AG04450 (cell line): ENCODE measurements at regions of chr5 and their contacts with region 1.

Region 1: GRCh38 chr5:134041570-134042411 is 37.0 kb upstream of the VDAC1 start:
- DNase-seq: no peak
- H3K4me3 ChIP-seq: no peak overlapping the region
- H3K27ac ChIP-seq: no peak overlapping the region
- H3K27me3 ChIP-seq: peaks cover 32% of the 10 kb centered on the region
- CTCF ChIP-seq: no peak

Region 2: GRCh38 chr5:134026521-134027268 is 15.1 kb before region 1 on chr5:
- CTCF ChIA-PET with region 1: interaction called, 32 read pairs
- POLR2A ChIA-PET with region 1: interaction called, 3 read pairs
- DNase-seq: peak; percentile 29
- H3K4me3 ChIP-seq: no peak overlapping the region
- H3K27ac ChIP-seq: no peak overlapping the region
- H3K27me3 ChIP-seq: peaks cover 44% of the 10 kb centered on the region
- CTCF ChIP-seq: peak; percentile 69

Region 3: GRCh38 chr5:134070725-134071613 is 29.2 kb after region 1 on chr5:
- CTCF ChIA-PET with region 1: interaction called, 27 read pairs
- POLR2A ChIA-PET with region 1: no interaction called
- DNase-seq: no peak
- H3K4me3 ChIP-seq: peak overlapping the region; percentile 10; the same call in 1 of the 2 replicates
- H3K27ac ChIP-seq: no peak overlapping the region
- H3K27me3 ChIP-seq: peaks cover 45% of the 10 kb centered on the region
- CTCF ChIP-seq: no peak

Region 4: GRCh38 chr5:134125039-134126015 is 83.5 kb after region 1 on chr5:
- CTCF ChIA-PET with region 1: interaction called, 41 read pairs
- POLR2A ChIA-PET with region 1: interaction called, 4 read pairs
- DNase-seq: peak; percentile 75
- H3K4me3 ChIP-seq: no peak overlapping the region
- H3K27ac ChIP-seq: peak overlapping the region; percentile 96
- H3K27me3 ChIP-seq: no peaks in the 10 kb centered on the region
- CTCF ChIP-seq: no peak

Region 5: DNA sequence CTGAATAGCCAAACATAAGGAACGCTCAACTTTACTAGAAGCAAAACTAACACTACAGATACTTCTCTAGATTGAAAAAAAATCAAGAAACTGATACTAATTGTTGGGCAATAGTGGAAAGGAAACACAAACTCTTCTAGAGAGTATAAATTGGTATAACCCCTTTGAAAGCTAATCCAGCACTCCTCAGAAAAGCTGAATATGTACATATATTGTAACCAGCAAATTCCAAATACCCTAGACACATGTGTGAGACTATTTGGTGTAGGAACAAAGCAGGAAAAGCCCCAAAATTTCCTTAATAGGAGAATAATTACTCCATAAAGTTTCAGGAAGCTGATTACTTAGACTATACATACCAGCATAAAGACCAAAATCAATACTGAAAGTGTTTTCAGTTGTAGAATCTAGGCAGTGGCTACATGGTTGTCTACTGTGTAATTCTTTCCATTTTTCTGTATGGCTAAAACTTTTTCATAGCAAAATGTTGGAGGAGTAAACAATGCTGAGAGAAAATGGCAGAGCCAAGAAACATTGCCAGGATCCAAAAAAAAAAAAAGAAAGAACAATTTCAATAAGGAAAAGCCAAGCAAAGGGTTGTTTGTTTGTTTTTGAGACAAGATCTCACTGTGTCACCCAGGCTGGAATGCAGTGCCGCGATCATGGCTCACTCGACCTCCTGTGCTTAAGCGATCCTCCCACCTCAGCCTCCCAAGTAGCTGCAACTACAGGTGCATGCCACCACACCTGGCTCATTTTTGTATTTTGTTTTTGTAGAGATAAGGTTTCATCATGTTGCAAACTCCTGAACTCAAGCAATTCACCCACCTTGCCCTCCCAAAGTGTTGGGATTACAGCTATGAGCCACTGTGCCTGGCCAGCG is 120.0 kb after region 1 on chr5:
- CTCF ChIA-PET with region 1: interaction called, 13 read pairs
- POLR2A ChIA-PET with region 1: no interaction called
- DNase-seq: no peak
- H3K4me3 ChIP-seq: no peak overlapping the region
- H3K27ac ChIP-seq: no peak overlapping the region
- H3K27me3 ChIP-seq: no peaks in the 10 kb centered on the region
- CTCF ChIP-seq: no peak